ENCODE measurements at regions of chr4 and their contacts with region 1.

Region 1: DNA sequence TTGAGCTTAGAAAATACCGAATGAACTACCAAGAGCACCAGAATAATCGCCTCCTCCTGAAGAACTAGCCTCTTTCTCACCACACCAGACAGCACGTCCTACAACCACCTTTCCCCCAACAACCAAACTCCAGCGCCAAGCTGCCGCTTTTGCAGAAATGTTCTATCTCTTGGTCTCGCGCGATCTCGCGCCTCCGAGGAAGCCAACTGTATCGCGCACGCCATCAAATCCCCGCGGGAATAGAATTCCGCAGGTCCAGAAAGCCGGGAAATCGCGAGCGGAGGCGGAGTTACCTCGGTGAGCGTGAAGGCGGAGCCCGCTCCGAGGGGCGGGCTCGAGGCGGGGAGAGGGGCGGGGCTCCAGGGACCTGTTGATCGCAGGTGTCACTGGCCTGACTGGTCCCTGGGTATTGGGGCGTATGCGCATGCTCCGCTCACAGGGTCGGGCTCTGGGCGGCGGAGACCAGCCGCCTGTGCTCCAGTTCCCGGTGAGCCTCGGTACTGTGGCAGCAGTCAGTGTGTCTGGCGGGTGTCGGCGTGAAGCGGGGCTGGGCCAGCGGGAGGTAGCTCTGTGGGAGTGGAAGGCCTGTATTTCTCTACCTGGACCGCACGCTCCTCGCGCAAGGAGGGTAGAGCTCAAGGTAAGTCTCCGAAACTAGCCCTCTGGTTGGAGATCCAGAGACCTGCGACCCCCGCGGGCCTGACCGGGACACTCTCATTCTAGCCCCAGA is at the start of gene USP53:
- DNase-seq: peak; percentile 96 to 97
- ATAC-seq: peak; percentile 96 to 99 (median 98)
- H3K4me3 ChIP-seq: peak within 1 kb of the TSS; percentile 69 to 93 (median 82)
- H3K27ac ChIP-seq: peak within 1 kb of the TSS; percentile 92 to 97 (median 96)
- H3K4me1 ChIP-seq: peaks cover 0 to 44% (median 19%) of the 10 kb centered on the region in 9 donors
- H3K27me3 ChIP-seq: no peaks in the 10 kb centered on the region
- CTCF ChIP-seq: peak in 1 of 9 donors; percentile 5
- total RNA-seq, gene USP53: 26.4 to 64.6 (median 41.8) TPM

Region 2: DNA sequence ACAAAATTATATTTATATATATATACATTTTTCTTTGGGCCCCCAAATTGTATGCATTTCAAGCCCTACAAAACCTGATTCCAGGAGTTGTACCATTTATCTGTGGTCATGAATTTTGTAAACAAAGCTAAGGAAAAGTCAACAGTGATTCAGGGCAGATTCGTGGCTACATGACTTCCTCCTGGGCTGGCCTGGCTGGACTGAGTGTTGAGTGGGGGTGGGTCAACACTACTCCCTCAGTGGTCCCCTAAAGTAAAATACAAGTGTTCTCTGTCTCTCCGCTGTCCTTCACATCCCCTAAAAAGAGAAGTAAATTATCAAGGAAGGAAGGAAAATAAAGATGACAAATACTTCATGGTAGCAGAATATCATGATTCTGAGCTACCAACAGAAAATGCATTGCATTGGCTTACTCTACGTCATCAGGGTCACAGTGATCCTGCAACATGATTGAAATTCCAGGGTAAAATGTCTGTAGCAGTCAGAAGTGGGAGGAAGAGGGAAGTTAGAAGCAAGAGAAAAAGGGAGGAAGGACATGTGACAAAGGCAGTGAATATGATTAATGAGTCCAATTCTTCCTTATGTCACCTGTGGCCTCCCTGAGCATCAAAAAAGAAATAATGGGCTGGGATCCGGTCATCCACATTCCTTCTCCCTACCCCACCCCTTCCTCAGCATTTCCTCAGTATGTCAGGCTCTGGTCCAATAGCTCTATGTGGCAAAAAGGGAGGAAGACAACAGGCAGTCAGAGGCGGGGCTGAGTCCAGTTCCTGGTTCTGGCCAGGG is 119.2 kb before region 1 on chr4:
- intact Hi-C with region 1: no loop called
- DNase-seq: no peak
- ATAC-seq: peak in 6 of 8 donors; percentile 22 to 79 (median 68)
- H3K4me3 ChIP-seq: no peak overlapping the region
- H3K27ac ChIP-seq: peak overlapping the region in 1 of 10 donors; percentile 32
- H3K4me1 ChIP-seq: peaks cover 0 to 18% (median 5%) of the 10 kb centered on the region in 9 donors
- H3K27me3 ChIP-seq: no peaks in the 10 kb centered on the region
- CTCF ChIP-seq: no peak

Region 3: DNA sequence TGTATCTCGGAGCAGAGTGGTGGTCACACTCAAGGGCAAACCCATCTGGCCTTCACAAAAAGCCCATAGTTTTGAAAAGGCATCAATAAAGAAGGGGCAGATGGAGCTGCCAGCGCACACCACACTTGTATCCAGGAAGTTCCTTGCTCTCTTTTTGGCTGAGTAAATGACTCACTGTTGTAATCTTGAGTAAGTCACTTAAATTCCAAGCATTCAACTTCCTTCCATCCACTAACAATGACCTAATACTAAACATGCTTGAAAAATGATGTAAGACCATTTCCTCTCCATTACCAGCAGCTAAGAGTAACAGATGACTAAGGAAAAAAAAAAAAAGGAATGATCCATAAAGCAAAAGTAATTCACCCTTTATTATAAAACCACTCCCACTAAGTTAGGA is 109.1 kb before region 1 on chr4:
- intact Hi-C with region 1: loop called in 2 of 10 experiments (anchors 2 to 5 kb)
- DNase-seq: no peak
- ATAC-seq: peak; percentile 49 to 90 (median 75)
- H3K4me3 ChIP-seq: no peak overlapping the region
- H3K27ac ChIP-seq: peak overlapping the region in 8 of 10 donors; percentile 24 to 79 (median 56)
- H3K4me1 ChIP-seq: peaks cover 0 to 69% (median 46%) of the 10 kb centered on the region in 9 donors
- H3K27me3 ChIP-seq: no peaks in the 10 kb centered on the region
- CTCF ChIP-seq: no peak

Region 4: DNA sequence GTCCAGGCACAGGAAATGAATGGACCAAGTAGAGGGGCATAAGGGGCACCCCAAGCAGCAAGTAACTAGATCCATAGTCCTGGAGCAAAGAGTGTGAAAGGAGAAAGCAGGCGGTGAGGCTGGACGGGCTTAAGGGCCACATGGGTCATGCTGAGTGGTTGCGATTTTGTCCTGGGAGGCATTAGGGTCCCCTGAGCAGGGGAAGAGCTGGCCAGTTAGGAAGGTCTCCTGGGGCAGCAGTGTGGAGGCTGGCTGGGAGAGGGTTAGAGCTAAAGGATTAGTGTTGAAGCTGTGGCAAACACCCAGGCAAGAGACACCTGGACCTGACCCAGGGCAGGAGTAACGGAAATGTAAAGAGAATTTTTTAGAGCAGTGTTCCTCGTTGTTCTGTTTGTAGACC is 50.2 kb before region 1 on chr4:
- intact Hi-C with region 1: loop called in 1 of 10 experiments (anchors 10 kb)
- DNase-seq: no peak
- ATAC-seq: peak in 6 of 8 donors; percentile 35 to 45 (median 40)
- H3K4me3 ChIP-seq: no peak overlapping the region
- H3K27ac ChIP-seq: peak overlapping the region in 1 of 10 donors; percentile 13
- H3K4me1 ChIP-seq: peaks cover 0 to 52% (median 0%) of the 10 kb centered on the region in 9 donors
- H3K27me3 ChIP-seq: no peaks in the 10 kb centered on the region
- CTCF ChIP-seq: no peak

Region 5: GRCh38 chr4:119300101-119300978 is 87.9 kb after region 1 on chr4:
- intact Hi-C with region 1: loop called in 1 of 10 experiments (anchors 1 kb)
- DNase-seq: peak; percentile 92 to 96
- ATAC-seq: peak; percentile 96 to 98 (median 97)
- H3K4me3 ChIP-seq: peak overlapping the region; percentile 49 to 96 (median 73)
- H3K27ac ChIP-seq: peak overlapping the region; percentile 59 to 97 (median 91)
- H3K4me1 ChIP-seq: peaks cover 8 to 43% (median 26%) of the 10 kb centered on the region in 9 donors
- H3K27me3 ChIP-seq: no peaks in the 10 kb centered on the region
- CTCF ChIP-seq: peak in 1 of 9 donors; percentile 24

Measured in heart right ventricle (tissue), 16 donors.